IMR-90 (cell line): ENCODE measurements at regions of chr12 and their contacts with region 1.

Region 1: DNA sequence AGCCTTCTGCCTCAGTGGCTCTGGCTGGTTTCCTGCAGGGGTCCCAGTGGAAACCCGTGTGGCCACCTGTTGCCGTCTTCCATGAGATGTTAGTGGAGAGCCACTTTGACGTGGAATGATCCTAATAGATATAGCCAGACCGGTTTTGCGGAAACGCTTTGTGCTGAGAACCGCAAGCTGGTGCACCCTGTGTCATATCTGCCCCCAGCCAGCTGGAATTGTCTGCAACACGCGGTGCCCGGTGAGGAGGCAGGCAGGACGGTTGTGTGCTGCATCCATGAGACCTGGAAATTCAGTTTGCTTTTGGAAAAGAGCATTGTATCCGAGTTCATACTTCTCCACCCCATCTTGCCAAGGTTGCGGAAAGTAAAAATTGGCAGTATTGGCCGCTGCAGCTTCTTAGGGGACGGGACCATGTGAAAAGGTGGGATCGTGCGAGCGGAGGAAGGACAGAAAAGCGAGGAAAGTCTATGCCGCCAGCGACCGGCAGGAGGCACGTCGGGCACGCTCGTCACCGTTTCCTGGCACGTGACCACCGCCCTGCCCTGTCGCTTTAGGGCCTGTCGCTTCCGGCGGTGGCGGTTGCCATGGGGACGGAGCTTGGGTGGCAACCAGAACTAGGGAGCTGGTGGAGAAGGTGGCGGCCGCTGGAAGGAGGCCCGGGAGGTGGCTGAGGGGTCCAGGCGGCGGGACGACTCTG is at the start of gene CFAP251:
- DNase-seq: peak; percentile 58
- ATAC-seq: peak; percentile 44
- H3K4me3 ChIP-seq: no peak within 1 kb of the TSS
- H3K27ac ChIP-seq: peak within 1 kb of the TSS; percentile 18; the same call in 1 of the 2 replicates
- H3K4me1 ChIP-seq: peaks cover 9% of the 10 kb centered on the region
- H3K27me3 ChIP-seq: no peaks in the 10 kb centered on the region
- CTCF ChIP-seq: peak; percentile 55
- POLR2A ChIP-seq: no peak
- RAD21 ChIP-seq: peak; percentile 59
- total RNA-seq, gene CFAP251: 9.1 and 9.4 TPM in 2 replicates

Region 2: GRCh38 chr12:121903202-121903601 is 14.9 kb before region 1 on chr12:
- CTCF ChIA-PET with region 1: no interaction called
- POLR2A ChIA-PET with region 1: no interaction called
- dilution Hi-C with region 1: no loop called
- in situ Hi-C with region 1: no loop called
- intact Hi-C with region 1: no loop called
- DNase-seq: no peak
- ATAC-seq: no peak
- H3K4me3 ChIP-seq: no peak overlapping the region
- H3K27ac ChIP-seq: no peak overlapping the region
- H3K4me1 ChIP-seq: no peaks in the 10 kb centered on the region
- H3K27me3 ChIP-seq: no peaks in the 10 kb centered on the region
- CTCF ChIP-seq: no peak
- POLR2A ChIP-seq: no peak
- RAD21 ChIP-seq: no peak

Region 3: GRCh38 chr12:122123051-122123760 is 205.1 kb after region 1 on chr12:
- CTCF ChIA-PET with region 1: no interaction called
- POLR2A ChIA-PET with region 1: no interaction called
- dilution Hi-C with region 1: no loop called
- in situ Hi-C with region 1: no loop called
- intact Hi-C with region 1: loop called (anchors 2 kb)
- DNase-seq: peak; percentile 66
- ATAC-seq: peak; percentile 79
- H3K4me3 ChIP-seq: no peak overlapping the region
- H3K27ac ChIP-seq: no peak overlapping the region
- H3K4me1 ChIP-seq: peaks cover 7% of the 10 kb centered on the region; the same call in 1 of the 2 replicates
- H3K27me3 ChIP-seq: no peaks in the 10 kb centered on the region
- CTCF ChIP-seq: peak; percentile 79
- POLR2A ChIP-seq: no peak
- RAD21 ChIP-seq: peak; percentile 86